IMR-90 (cell line): ENCODE measurements at regions of chr7 and their contacts with region 1.

Region 1: DNA sequence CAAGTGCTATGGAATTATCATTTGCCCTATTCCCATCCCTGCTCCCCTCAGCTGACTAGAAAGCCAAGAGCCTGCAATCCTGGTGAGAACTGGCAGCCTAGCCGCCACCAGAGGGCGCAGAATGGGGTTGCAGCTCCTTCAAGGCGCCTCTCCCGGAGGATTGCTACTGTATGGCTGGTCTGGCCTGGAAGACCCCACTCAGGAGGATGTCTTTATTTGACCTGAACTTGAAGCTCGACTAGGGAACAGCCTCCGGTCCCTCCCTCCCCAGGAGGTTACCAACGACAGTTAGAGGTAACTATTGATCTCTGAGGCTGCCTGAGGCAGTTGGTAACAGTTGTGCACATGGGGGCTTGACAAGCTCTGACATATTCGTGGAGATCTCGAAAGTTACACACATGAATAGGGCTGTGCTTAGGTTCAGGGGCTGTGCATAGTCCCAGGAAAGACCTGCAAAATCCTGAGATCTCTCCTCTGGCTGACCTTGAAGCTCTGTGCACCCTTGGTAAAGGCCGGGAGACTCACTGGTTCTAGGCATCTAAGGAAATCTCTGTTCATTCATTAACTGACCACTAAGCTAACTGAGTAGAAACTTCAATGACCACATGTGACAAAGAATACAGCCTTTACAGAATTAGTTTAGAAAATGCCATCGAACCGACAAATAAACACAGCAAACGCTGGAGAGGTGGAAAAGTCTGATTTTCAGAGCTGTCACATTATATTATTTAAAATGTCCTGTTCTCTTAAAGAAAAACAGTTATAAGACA is 65.7 kb downstream of the TSPAN12 start:
- DNase-seq: peak; percentile 65
- ATAC-seq: peak; percentile 96
- H3K4me3 ChIP-seq: no peak overlapping the region
- H3K27ac ChIP-seq: no peak overlapping the region
- H3K4me1 ChIP-seq: peaks cover 2% of the 10 kb centered on the region; the same call in 1 of the 2 replicates
- H3K27me3 ChIP-seq: no peaks in the 10 kb centered on the region
- CTCF ChIP-seq: peak; percentile 70
- POLR2A ChIP-seq: no peak
- RAD21 ChIP-seq: peak; percentile 59

Region 2: DNA sequence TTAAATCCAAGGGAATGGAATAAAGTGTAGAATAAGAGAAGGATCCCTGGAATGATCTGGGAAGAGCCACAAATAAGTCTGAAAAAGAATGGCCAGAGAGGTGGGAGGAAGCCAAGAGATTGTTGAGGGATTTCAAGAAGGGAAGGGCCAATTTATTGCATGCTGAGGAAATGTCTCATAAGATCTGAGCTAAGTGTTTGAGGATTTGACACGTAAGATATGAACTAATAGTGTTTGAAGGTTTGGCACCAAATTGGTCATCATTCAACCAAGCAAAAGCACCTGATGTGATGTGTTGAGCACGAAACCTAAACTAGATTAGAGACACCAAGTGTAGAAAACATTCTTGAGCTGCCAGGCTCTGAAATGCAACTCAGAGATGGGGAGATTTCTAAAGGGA is 32.2 kb before region 1 on chr7:
- CTCF ChIA-PET with region 1: no interaction called
- POLR2A ChIA-PET with region 1: no interaction called
- dilution Hi-C with region 1: no loop called
- in situ Hi-C with region 1: no loop called
- intact Hi-C with region 1: no loop called
- DNase-seq: no peak
- ATAC-seq: no peak
- H3K4me3 ChIP-seq: no peak overlapping the region
- H3K27ac ChIP-seq: no peak overlapping the region
- H3K4me1 ChIP-seq: no peaks in the 10 kb centered on the region
- H3K27me3 ChIP-seq: peaks cover 1% of the 10 kb centered on the region; the same call in 1 of the 2 replicates
- CTCF ChIP-seq: no peak
- POLR2A ChIP-seq: no peak
- RAD21 ChIP-seq: no peak

Region 3: DNA sequence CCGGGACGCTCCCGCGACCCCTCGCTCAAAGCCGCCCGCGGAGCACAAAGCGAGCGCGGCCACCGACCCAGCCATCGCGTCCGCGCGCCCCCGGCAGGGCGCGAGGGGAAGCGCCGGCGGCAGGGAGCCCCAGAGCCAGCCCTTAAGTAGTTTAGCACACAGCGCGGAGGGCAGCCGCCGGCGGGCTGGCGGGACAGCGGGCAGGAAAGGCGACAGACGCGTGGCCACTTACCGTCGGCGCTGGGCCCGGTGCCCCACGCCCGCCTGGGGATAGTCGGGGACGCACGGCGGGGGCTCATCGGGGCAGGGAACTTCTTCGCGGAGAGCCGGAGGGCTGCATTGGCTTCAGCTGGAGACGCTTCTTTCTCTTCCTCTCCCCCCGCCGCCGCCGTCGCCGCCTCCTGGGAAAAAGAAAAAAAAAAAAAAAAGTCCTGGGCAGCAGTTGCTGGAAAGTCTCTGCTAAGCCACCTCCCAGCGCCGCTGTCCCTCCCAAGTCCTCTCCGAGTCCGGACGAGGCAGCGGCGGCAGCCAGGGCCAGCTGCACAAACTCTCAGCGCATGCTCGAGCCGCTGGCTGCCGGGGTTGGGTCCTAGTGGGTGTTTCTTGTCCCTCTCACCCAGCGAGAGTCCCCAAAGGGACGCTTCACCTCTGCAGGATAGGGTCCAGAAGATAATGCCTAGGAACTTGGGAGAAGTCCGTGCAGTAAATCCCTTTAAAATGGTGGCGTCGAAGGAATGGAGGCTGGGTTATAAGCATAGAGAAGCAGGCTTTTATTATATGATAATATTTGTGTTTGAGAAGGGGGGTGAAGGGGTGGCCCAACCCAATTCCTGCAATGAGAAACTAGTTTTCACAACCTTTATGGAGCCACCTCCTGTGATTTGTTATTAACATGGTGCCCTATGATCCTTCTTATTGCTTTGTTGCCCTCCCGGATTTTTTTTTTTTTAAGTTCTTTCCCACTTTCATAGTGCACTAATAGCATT is 65.6 kb after region 1 on chr7 and contains the start of gene TSPAN12:
- CTCF ChIA-PET with region 1: interaction called, 5 read pairs
- POLR2A ChIA-PET with region 1: no interaction called
- dilution Hi-C with region 1: no loop called
- in situ Hi-C with region 1: no loop called
- intact Hi-C with region 1: loop called (anchors 1 kb)
- DNase-seq: peak; percentile 54
- ATAC-seq: peak; percentile 96
- H3K4me3 ChIP-seq: peak within 1 kb of the TSS; percentile 78
- H3K27ac ChIP-seq: peak within 1 kb of the TSS; percentile 79
- H3K4me1 ChIP-seq: no peaks in the 10 kb centered on the region
- H3K27me3 ChIP-seq: peaks cover 1% of the 10 kb centered on the region
- CTCF ChIP-seq: peak; percentile 65
- POLR2A ChIP-seq: no peak
- RAD21 ChIP-seq: peak; percentile 35
- total RNA-seq, gene TSPAN12: 0.72 and 1.1 TPM in 2 replicates

Region 4: DNA sequence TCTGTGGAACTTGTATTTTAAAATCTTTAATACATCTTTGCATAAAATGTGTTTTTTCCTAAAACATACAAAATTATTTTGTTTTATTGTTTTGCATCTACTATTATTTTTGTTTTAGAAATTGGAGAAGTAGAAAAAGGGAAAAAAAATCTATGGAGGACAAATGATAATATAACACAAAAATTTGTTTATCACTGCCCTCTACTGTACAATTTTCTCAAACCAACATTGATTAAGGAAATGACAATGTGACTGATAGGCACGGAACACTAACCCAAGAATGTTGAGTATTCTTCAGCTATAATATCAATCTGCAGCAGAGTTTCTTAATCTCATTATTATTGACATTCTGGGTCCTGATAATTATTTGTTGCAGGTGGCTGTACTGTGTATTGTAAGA is 148.8 kb after region 1 on chr7:
- CTCF ChIA-PET with region 1: interaction called, 5 read pairs
- POLR2A ChIA-PET with region 1: no interaction called
- dilution Hi-C with region 1: no loop called
- in situ Hi-C with region 1: no loop called
- intact Hi-C with region 1: loop called (anchors 2 kb)
- DNase-seq: no peak
- ATAC-seq: peak; percentile 57; the same call in 1 of the 2 replicates
- H3K4me3 ChIP-seq: no peak overlapping the region
- H3K27ac ChIP-seq: no peak overlapping the region
- H3K4me1 ChIP-seq: no peaks in the 10 kb centered on the region
- H3K27me3 ChIP-seq: no peaks in the 10 kb centered on the region
- CTCF ChIP-seq: peak; percentile 40
- POLR2A ChIP-seq: no peak
- RAD21 ChIP-seq: peak; percentile 32; the same call in 1 of the 2 replicates

Region 5: DNA sequence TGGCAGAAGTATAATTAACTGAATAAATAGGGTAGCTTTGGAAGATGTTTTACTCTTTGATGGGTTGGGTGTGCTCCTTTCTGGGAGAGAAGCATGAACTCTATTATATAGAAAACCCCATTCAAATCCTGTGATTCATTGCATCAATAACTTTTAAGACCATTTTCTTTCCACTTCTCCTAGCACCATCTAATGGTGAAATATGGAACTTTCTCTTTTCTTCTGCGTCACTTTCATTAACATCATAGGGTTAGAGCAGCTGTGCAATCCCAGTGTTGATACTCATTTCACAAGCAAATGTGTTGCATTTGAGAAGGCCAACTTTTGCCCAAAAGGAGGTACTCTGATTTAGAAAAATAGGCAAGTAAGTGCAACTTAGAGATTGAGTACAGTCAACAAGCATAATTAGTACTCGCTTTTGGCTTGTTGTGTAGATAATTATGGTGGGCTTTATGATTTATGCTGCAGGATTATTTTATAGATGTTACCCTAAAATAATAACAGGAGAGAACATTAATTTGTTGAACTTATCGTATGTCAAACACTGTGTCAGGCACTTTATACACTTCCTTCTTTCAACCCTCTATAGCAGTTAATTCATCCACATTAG is 289.2 kb after region 1 on chr7:
- CTCF ChIA-PET with region 1: no interaction called
- POLR2A ChIA-PET with region 1: no interaction called
- dilution Hi-C with region 1: no loop called
- in situ Hi-C with region 1: no loop called
- intact Hi-C with region 1: loop called (anchors 1 kb)
- DNase-seq: peak; percentile 85
- ATAC-seq: peak; percentile 19
- H3K4me3 ChIP-seq: no peak overlapping the region
- H3K27ac ChIP-seq: no peak overlapping the region
- H3K4me1 ChIP-seq: peaks cover 19% of the 10 kb centered on the region
- H3K27me3 ChIP-seq: no peaks in the 10 kb centered on the region
- CTCF ChIP-seq: peak; percentile 78
- POLR2A ChIP-seq: no peak
- RAD21 ChIP-seq: peak; percentile 78

Region 6: DNA sequence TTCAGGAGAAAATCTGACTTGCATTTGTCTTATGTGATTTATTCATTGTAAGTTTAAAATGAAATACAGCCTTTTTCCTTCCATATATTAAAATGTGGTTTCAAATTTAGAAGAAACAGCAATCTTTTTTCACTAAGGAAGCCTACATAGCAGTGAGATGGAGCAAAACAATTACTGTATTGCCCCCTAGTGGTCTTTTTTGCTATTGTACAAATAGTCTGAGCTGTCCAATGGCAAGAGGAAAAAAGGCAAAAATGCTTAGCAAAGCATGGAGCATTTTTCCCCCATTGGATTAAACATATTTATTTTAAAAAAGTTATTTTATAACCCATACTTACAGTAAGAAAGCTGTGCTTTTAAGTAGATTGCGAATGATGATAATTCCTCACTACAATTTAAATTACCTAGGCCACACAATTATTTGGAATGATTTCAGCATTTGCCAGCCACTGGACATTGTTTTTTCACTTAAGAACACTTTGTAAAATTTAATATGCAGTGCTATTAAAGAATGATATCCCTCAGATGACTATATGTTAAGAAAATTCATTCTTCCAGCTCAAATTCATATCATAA is 315.7 kb after region 1 on chr7:
- CTCF ChIA-PET with region 1: no interaction called
- POLR2A ChIA-PET with region 1: no interaction called
- dilution Hi-C with region 1: no loop called
- in situ Hi-C with region 1: no loop called
- intact Hi-C with region 1: loop called (anchors 5 kb)
- DNase-seq: peak; percentile 78
- ATAC-seq: peak; percentile 92
- H3K4me3 ChIP-seq: no peak overlapping the region
- H3K27ac ChIP-seq: no peak overlapping the region
- H3K4me1 ChIP-seq: peaks cover 4% of the 10 kb centered on the region
- H3K27me3 ChIP-seq: no peaks in the 10 kb centered on the region
- CTCF ChIP-seq: peak; percentile 87
- POLR2A ChIP-seq: no peak
- RAD21 ChIP-seq: peak; percentile 83